ENCODE measurements at regions of chr19 and their contacts with region 1.

Region 1: DNA sequence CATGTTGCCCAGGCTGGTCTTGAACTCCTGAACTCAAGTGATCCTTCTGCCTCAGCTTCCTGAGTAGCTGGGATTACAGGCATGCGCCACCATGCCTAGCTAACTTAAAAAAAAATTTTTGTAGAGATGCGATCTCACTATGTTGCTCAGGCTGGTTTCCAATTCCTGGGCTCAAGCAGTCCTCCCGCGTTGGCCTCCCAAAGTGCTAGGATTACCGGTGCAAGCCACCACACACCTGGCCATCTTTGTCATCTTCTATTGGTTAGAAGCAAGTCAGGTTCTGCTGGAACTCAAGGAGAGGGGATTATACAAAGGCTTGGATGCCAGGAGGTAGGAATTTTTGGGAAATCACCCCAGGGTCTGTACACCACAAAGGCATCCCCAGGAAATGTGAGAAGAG is 25.2 kb downstream of the TNFSF14 start:
- DNase-seq: no peak
- ATAC-seq: no peak
- H3K4me3 ChIP-seq: no peak overlapping the region
- H3K27ac ChIP-seq: no peak overlapping the region
- H3K4me1 ChIP-seq: no peaks in the 10 kb centered on the region; a peak in 2 of 5 replicates
- H3K27me3 ChIP-seq: peaks cover 3 to 16% of the 10 kb centered on the region in 2 experiments; a peak in 3 of 5 replicates
- CTCF ChIP-seq: no peak
- EP300 ChIP-seq: no peak
- POLR2A ChIP-seq: no peak
- RAD21 ChIP-seq: no peak

Region 2: GRCh38 chr19:6868351-6868750 is 223.6 kb after region 1 on chr19:
- CTCF ChIA-PET with region 1: no interaction called
- POLR2A ChIA-PET with region 1: no interaction called
- in situ Hi-C with region 1: loop called (anchors 5 kb)
- intact Hi-C with region 1: no loop called
- DNase-seq: no peak
- ATAC-seq: no peak
- H3K4me3 ChIP-seq: no peak overlapping the region
- H3K27ac ChIP-seq: no peak overlapping the region
- H3K4me1 ChIP-seq: no peaks in the 10 kb centered on the region; a peak in 1 of 5 replicates
- H3K27me3 ChIP-seq: peaks cover 0 to 5% of the 10 kb centered on the region in 2 experiments; a peak in 2 of 5 replicates
- CTCF ChIP-seq: no peak
- EP300 ChIP-seq: no peak
- POLR2A ChIP-seq: no peak
- RAD21 ChIP-seq: no peak

Measured in K562 (cell line).